ENCODE measurements at regions of chr20 and their contacts with region 1.

Region 1: DNA sequence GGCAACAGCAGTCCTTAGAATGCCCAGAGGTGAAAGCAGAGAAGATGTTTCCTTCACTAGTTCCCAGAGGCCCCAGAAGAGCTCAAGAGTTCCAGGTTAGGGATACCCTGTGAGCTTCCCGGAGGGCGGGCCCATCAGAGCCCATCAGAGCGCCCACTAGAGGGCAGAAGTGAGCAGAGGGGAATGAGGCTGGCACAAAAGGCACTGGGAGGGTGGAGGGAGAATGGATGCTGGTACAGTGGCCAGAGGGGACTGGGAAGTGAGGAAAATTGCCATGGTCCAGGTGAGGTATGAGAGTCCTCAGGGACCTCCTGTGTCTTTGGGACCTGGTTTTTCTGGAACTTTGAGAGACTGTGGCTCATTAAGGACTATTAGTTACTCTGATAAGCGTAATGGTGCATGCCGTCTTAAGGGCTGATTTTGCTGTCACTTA is 57.3 kb downstream of the LINC00237 start:
- DNase-seq: peak; percentile 62
- ATAC-seq: peak; percentile 55
- H3K4me3 Mint-ChIP-seq: no peak overlapping the region
- H3K27ac Mint-ChIP-seq: no peak overlapping the region
- H3K4me1 Mint-ChIP-seq: no peaks in the 10 kb centered on the region
- H3K27me3 Mint-ChIP-seq: peaks cover 12% of the 10 kb centered on the region
- CTCF ChIP-seq: peak; percentile 88

Region 2: GRCh38 chr20:21033817-21034216 is 15.0 kb before region 1 on chr20:
- CTCF ChIA-PET with region 1: interaction called, 13 read pairs
- POLR2A ChIA-PET with region 1: no interaction called
- intact Hi-C with region 1: no loop called
- DNase-seq: no peak
- ATAC-seq: no peak
- H3K4me3 Mint-ChIP-seq: no peak overlapping the region
- H3K27ac Mint-ChIP-seq: no peak overlapping the region
- H3K4me1 Mint-ChIP-seq: no peaks in the 10 kb centered on the region
- H3K27me3 Mint-ChIP-seq: peaks cover 14% of the 10 kb centered on the region
- CTCF ChIP-seq: no peak

Region 3: DNA sequence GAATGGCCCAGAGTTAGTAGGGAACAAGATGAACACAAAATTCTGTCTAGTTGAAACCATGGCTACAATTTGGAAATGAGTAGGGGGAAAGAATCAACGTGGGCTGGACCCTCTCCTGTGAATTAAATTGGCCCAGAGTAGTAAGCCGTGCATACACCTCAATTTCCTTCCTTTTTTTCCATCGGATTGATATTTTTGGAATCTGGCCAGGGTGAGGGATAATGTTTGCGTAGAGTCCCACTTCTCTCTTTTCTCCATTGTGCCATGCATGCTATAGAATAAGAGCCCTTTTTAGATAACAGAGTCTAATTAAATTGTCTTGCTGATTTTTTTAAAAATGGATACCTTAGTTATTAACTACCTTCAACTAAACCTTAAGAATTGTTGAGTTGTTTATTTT is 289.4 kb after region 1 on chr20:
- CTCF ChIA-PET with region 1: no interaction called
- POLR2A ChIA-PET with region 1: no interaction called
- intact Hi-C with region 1: no loop called
- DNase-seq: no peak
- ATAC-seq: no peak
- H3K4me3 Mint-ChIP-seq: no peak overlapping the region
- H3K27ac Mint-ChIP-seq: no peak overlapping the region
- H3K4me1 Mint-ChIP-seq: peaks cover 6% of the 10 kb centered on the region
- H3K27me3 Mint-ChIP-seq: no peaks in the 10 kb centered on the region
- CTCF ChIP-seq: no peak